ENCODE measurements at regions of chr4 and their contacts with region 1.

Region 1: DNA sequence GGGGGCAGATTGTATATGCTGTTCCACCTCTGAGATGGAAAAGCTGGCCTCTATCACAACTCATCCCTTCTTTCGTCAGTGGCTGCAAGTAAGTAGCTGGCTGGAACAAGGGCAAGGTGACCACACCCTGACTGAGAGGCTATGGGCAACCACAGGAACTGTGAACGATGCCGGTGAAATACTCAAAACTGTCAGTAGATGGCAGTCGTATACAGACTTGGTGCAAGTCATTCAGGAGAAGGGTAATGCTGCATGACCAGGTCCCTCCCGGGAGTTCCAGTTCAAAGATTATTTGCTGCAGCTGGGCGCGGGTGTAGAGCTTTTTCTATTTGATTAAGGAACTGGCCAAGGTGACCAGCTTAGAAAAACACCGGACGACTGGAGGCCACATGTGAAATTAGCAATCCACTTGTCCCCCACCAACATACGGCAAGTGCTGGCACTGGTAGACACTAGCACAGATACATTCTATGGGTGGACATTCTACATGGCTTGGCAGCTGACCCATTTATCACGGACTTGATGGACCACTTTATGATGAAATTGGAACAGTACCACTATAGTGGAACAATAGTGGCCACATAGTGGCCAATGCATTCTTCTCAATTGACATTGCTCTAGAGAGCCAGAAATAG is 726.7 kb downstream of the TRAM1L1 start:
- DNase-seq: no peak
- H3K4me3 ChIP-seq: no peak overlapping the region
- H3K27ac ChIP-seq: no peak overlapping the region
- H3K4me1 ChIP-seq: peaks cover 0 to 8% (median 0%) of the 10 kb centered on the region in 4 donors
- H3K27me3 ChIP-seq: no peaks in the 10 kb centered on the region
- CTCF ChIP-seq: peak; percentile 48 to 72 (median 57)
- EP300 ChIP-seq: no peak
- POLR2A ChIP-seq: no peak

Region 2: GRCh38 chr4:118224239-118224829 is 1865.6 kb after region 1 on chr4:
- intact Hi-C with region 1: loop called (anchors 10 kb)
- DNase-seq: no peak
- H3K4me3 ChIP-seq: no peak overlapping the region
- H3K27ac ChIP-seq: no peak overlapping the region
- H3K4me1 ChIP-seq: no peaks in the 10 kb centered on the region
- H3K27me3 ChIP-seq: no peaks in the 10 kb centered on the region
- CTCF ChIP-seq: peak; percentile 41 to 59 (median 54)
- EP300 ChIP-seq: no peak
- POLR2A ChIP-seq: no peak